Activated CD4-positive, alpha-beta memory T cell treated with anti-CD3 and anti-CD28 coated beads for 36 hours (primary cell): ENCODE measurements at regions of chr18 and their contacts with region 1.

Region 1: DNA sequence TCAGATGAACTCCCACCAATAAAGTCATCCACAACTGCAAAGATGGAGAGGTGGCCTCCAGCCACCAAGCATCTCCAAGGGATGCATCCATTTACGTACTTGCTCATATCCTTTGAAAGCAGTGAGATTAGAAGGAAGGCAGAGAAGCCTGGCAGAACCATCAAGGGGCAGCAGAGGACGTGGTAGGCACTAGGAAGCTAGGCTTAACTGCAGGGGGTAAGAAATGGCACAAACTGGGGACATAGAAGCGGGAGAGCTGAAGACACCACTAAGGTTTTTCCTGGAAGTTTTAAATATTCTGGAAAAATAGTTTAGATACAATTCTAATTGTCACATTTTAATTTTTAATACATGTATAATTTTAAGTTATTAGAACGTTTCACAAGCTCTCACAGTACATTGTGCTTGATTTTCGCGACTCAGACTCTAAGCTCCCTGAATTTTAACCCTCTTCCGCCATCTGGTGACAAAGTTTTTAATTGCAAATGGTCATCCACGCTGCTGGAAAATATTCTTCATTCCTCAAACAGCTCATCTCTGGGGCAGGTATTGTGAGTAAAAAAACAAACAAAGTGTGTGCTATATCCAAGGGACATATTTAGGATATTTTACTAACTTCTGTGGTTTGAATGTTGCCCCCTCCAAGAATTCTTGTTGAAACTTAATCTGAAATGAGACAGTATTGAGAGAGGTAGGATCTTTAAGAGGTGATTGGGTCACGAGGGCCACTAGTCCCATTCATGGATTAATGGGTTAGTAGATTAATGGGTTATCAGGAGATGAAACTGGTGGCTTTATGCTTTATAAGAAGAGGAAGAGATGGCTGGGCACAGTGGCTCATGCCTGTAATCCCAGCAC is 1.6 kb upstream of the PSTPIP2 start:
- DNase-seq: peak; percentile 65
- H3K4me3 Mint-ChIP-seq: no peak overlapping the region
- H3K27ac Mint-ChIP-seq: no peak overlapping the region
- H3K4me1 Mint-ChIP-seq: peaks cover 37% of the 10 kb centered on the region
- H3K27me3 Mint-ChIP-seq: no peaks in the 10 kb centered on the region

Region 2: DNA sequence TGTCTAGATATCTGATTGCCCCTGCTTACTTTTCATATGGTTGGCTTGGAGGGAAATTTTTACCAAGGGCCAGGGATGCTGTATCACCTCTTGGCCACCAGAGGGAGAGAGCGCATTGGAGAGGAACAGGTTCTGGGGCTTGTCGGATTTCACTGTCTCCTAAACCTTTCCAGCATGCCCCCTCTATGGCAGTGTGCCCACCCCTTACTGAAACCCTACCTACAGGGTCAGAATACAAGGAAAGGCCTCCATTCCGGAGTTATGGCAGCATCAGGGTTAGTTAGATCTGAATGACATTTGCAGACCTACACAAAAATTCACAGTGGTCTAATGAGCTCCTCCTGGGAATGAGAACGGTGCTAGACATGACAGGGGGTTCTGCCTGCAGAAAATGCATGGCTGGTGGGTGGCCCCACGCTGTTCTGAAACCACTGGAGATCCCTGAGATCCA is 452.6 kb before region 1 on chr18:
- CTCF ChIA-PET with region 1: interaction called, 4 read pairs
- POLR2A ChIA-PET with region 1: no interaction called
- intact Hi-C with region 1: loop called (anchors 2 kb)
- DNase-seq: peak; percentile 44
- H3K4me3 Mint-ChIP-seq: no peak overlapping the region
- H3K27ac Mint-ChIP-seq: no peak overlapping the region
- H3K4me1 Mint-ChIP-seq: no peaks in the 10 kb centered on the region
- H3K27me3 Mint-ChIP-seq: peaks cover 6% of the 10 kb centered on the region

Region 3: DNA sequence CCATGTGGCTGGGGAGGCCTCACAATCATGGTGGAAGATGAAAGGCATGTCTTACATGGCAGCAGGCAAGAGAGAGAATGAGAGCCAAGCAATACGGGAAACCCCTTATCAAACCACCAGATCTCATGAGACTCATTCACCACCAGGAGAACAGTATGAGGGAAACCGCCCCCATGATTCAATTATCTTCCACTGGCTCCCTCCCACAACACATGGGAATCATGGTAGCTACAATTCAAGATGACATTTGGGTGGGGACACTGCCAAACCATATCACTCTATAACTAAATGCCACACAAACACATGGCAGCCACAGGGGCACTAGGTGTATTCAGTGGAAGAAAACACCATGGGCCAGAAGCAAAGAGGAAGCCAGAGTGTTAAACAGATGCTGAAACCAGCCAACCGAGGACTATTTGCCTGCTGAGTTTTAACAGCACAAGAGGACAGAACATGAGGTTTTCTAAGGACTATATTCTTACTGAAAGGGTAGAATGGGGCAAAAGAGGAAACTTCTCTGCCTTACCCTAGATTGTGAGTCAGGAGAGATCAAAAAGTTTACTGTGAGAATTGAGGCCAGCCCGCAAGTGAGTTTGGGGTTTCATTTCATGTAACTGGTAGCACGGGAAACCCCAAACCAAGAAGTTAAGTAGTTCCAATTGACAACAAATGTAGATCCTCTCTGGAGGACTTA is 199.1 kb before region 1 on chr18:
- CTCF ChIA-PET with region 1: interaction called, 22 read pairs
- POLR2A ChIA-PET with region 1: no interaction called
- intact Hi-C with region 1: loop called (anchors 2 kb)
- DNase-seq: peak; percentile 87
- H3K4me3 Mint-ChIP-seq: peak overlapping the region; percentile 1
- H3K27ac Mint-ChIP-seq: peak overlapping the region; percentile 94
- H3K4me1 Mint-ChIP-seq: peaks cover 31% of the 10 kb centered on the region
- H3K27me3 Mint-ChIP-seq: no peaks in the 10 kb centered on the region

Region 4: GRCh38 chr18:45923138-45923537 is 150.6 kb before region 1 on chr18:
- CTCF ChIA-PET with region 1: interaction called, 21 read pairs
- POLR2A ChIA-PET with region 1: no interaction called
- intact Hi-C with region 1: no loop called
- DNase-seq: no peak
- H3K4me3 Mint-ChIP-seq: no peak overlapping the region
- H3K27ac Mint-ChIP-seq: no peak overlapping the region
- H3K4me1 Mint-ChIP-seq: peaks cover 10% of the 10 kb centered on the region
- H3K27me3 Mint-ChIP-seq: no peaks in the 10 kb centered on the region

Region 5: GRCh38 chr18:45967007-45967706 is 106.5 kb before region 1 on chr18 and contains the start of gene EPG5:
- CTCF ChIA-PET with region 1: interaction called, 23 read pairs
- POLR2A ChIA-PET with region 1: no interaction called
- intact Hi-C with region 1: loop called (anchors 2 kb)
- DNase-seq: peak; percentile 97
- H3K4me3 Mint-ChIP-seq: peak within 1 kb of the TSS; percentile 93
- H3K27ac Mint-ChIP-seq: peak within 1 kb of the TSS; percentile 83
- H3K4me1 Mint-ChIP-seq: peaks cover 33% of the 10 kb centered on the region
- H3K27me3 Mint-ChIP-seq: no peaks in the 10 kb centered on the region
- total RNA-seq, gene EPG5: 18.8 to 21.4 TPM

Region 6: GRCh38 chr18:46013484-46014189 is 60.1 kb before region 1 on chr18:
- CTCF ChIA-PET with region 1: interaction called, 13 read pairs
- POLR2A ChIA-PET with region 1: interaction called, 3 read pairs
- intact Hi-C with region 1: loop called (anchors 1 kb)
- DNase-seq: peak; percentile 19
- H3K4me3 Mint-ChIP-seq: no peak overlapping the region
- H3K27ac Mint-ChIP-seq: peak overlapping the region; percentile 28
- H3K4me1 Mint-ChIP-seq: peaks cover 16% of the 10 kb centered on the region
- H3K27me3 Mint-ChIP-seq: peaks cover 2% of the 10 kb centered on the region

Region 7: GRCh38 chr18:46054956-46055837 is 18.5 kb before region 1 on chr18:
- CTCF ChIA-PET with region 1: interaction called, 15 read pairs
- POLR2A ChIA-PET with region 1: no interaction called
- intact Hi-C with region 1: no loop called
- DNase-seq: no peak
- H3K4me3 Mint-ChIP-seq: no peak overlapping the region
- H3K27ac Mint-ChIP-seq: peak overlapping the region; percentile 24
- H3K4me1 Mint-ChIP-seq: peaks cover 41% of the 10 kb centered on the region
- H3K27me3 Mint-ChIP-seq: no peaks in the 10 kb centered on the region